ENCODE measurements at regions of chr7 and their contacts with region 1.

Region 1: GRCh38 chr7:135193615-135194081 is 17.7 kb downstream of the WDR91 start:
- DNase-seq: no peak
- H3K4me3 ChIP-seq: no peak overlapping the region
- H3K27ac ChIP-seq: no peak overlapping the region
- H3K4me1 ChIP-seq: no peaks in the 10 kb centered on the region
- H3K27me3 ChIP-seq: no peaks in the 10 kb centered on the region
- CTCF ChIP-seq: no peak
- EP300 ChIP-seq: no peak
- POLR2A ChIP-seq: no peak

Region 2: DNA sequence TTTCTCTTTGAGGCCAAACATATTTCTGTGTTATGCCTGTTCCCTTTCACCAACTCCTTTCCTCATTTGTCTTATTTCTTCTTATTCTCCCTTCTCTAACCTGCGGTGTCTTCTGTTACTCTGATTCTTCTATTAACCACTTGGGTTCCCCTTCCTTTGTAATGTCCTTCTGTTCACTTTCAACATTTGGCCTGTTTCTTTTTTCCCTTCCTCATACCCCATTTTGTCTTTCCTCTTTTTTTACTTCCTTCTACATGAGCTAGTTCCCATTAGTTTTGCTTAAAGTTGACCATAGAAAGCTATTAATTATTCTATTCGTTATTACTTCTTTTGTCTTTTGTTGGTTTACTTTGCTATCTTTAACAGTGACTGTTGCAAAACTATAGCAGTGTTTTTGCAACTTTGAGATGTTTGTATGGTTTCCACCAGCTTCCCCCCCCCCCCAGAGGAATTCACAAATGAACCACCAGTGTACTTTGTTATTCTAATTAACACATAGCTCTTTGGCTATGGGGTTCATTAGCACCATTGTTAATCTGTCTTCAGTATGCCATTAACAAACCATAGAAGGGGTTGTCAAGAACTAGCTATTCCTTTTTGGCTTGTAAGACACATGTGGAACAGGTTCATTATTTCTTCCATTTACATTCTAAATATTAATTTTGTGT is 1063.7 kb before region 1 on chr7:
- in situ Hi-C with region 1: no loop called
- intact Hi-C with region 1: loop called (anchors 10 kb)
- DNase-seq: no peak
- H3K4me3 ChIP-seq: no peak overlapping the region
- H3K27ac ChIP-seq: no peak overlapping the region
- H3K4me1 ChIP-seq: peaks cover 0 to 12% (median 6%) of the 10 kb centered on the region in 4 donors
- H3K27me3 ChIP-seq: no peaks in the 10 kb centered on the region
- CTCF ChIP-seq: no peak
- EP300 ChIP-seq: no peak
- POLR2A ChIP-seq: no peak

Region 3: DNA sequence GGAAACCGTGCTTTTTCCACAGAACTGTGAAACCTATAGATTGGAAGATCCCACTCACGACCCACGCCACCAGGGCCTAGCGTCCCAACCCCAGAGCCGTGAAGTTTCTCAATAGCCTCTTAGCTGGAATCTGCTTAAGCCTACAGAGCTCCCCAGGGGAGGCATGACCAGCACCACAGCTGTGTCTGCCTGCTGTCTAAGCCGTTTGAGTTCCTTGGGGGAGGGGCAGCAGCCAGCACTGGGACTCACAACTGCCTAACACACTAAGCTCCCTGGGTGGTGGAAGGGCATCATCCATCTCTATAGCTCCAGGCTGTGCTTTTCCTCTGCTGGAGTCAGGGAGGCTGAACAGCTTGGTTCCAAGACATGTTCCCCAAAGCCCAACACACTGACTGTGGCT is 71.8 kb before region 1 on chr7:
- in situ Hi-C with region 1: no loop called
- intact Hi-C with region 1: no loop called
- DNase-seq: no peak
- H3K4me3 ChIP-seq: no peak overlapping the region
- H3K27ac ChIP-seq: no peak overlapping the region
- H3K4me1 ChIP-seq: no peaks in the 10 kb centered on the region
- H3K27me3 ChIP-seq: no peaks in the 10 kb centered on the region
- CTCF ChIP-seq: no peak
- EP300 ChIP-seq: no peak
- POLR2A ChIP-seq: no peak

Region 4: GRCh38 chr7:135512135-135512887 is 318.7 kb after region 1 on chr7:
- in situ Hi-C with region 1: no loop called
- intact Hi-C with region 1: no loop called
- DNase-seq: no peak
- H3K4me3 ChIP-seq: no peak overlapping the region
- H3K27ac ChIP-seq: no peak overlapping the region
- H3K4me1 ChIP-seq: peaks cover 9 to 22% (median 19%) of the 10 kb centered on the region in 4 donors
- H3K27me3 ChIP-seq: no peaks in the 10 kb centered on the region
- CTCF ChIP-seq: peak in 4 of 5 experiments; percentile 43 to 59 (median 50)
- EP300 ChIP-seq: no peak
- POLR2A ChIP-seq: no peak